ENCODE measurements at regions of chr7 and their contacts with region 1.

Region 1: DNA sequence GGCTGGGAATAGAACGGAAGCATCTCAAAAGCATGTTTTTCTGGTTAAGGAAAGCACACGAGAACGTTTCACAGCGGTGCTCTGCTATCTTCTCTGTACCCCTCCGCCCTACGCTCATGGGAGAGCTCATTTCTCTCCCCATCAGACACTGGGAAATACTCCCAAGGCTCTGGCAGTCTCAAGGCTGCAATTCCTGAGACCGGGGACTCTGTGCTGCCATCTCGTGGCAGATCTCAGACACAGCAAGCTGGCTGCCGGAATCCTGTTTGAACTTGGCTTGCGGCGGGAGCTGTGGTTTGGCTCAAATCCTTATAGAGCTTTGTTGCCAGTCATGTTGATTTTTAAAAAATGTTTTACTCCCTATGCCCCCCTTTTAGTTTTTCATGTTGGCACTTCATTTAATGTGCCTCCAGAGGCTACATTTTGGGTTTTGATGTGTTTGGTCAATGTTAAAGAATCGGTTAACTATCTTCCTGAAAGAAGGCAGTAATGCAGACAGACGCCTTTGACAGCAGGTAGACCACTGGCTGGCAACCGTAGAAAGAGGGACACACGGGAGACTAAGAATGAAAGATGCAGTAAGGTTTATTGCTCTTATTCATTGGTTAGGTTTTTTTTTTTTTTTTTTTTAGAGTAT is 27.6 kb downstream of the BMPER start:
- DNase-seq: peak; percentile 66
- ATAC-seq: peak; percentile 95
- H3K4me3 ChIP-seq: no peak overlapping the region; a peak in 1 of 4 replicates
- H3K27ac ChIP-seq: no peak overlapping the region
- H3K4me1 ChIP-seq: peaks cover 3 to 8% of the 10 kb centered on the region in 2 experiments; a peak in 3 of 4 replicates
- H3K27me3 ChIP-seq: no peaks in the 10 kb centered on the region; the same call in 1 of the 2 replicates
- CTCF ChIP-seq: peak; percentile 64 to 96 (median 93); a peak in 5 of 6 replicates
- POLR2A ChIP-seq: no peak
- RAD21 ChIP-seq: peak; percentile 74

Region 2: DNA sequence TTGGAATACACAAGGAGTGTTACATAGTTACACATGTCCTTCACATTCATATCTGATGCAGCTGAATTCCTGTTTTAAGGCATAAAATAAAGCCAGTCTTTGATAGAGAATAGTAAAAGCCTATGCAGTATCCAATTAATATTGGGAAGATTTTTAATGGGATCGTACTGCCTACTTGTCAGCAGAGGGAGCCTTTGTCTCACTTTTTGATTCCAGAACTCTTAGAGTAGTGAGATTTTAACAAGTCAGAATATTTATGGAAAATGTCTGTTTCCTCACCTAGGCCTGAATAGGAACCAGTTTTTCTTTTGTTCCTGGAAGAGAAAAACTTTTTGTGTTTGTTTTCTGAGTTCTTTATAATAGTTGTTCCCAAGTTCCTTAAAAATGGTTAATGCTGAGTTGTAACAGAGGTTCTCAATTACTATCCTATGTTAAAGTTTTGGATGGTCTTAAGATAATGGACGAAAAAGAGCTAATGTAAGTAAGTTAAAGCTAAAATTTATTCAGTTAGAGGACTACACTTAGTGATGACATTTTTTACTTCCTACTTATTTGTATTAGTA is 689.5 kb before region 1 on chr7:
- CTCF ChIA-PET with region 1: interaction called, 27 read pairs
- POLR2A ChIA-PET with region 1: no interaction called
- RAD21 ChIA-PET with region 1: interaction called in 1 of 2 experiments, 3 read pairs
- intact Hi-C with region 1: loop called (anchors 1 kb)
- DNase-seq: peak; percentile 26
- ATAC-seq: peak; percentile 85
- H3K4me3 ChIP-seq: no peak overlapping the region
- H3K27ac ChIP-seq: no peak overlapping the region
- H3K4me1 ChIP-seq: no peaks in the 10 kb centered on the region
- H3K27me3 ChIP-seq: no peaks in the 10 kb centered on the region
- CTCF ChIP-seq: peak; percentile 57 to 76 (median 66)
- POLR2A ChIP-seq: no peak
- RAD21 ChIP-seq: peak; percentile 75

Region 3: DNA sequence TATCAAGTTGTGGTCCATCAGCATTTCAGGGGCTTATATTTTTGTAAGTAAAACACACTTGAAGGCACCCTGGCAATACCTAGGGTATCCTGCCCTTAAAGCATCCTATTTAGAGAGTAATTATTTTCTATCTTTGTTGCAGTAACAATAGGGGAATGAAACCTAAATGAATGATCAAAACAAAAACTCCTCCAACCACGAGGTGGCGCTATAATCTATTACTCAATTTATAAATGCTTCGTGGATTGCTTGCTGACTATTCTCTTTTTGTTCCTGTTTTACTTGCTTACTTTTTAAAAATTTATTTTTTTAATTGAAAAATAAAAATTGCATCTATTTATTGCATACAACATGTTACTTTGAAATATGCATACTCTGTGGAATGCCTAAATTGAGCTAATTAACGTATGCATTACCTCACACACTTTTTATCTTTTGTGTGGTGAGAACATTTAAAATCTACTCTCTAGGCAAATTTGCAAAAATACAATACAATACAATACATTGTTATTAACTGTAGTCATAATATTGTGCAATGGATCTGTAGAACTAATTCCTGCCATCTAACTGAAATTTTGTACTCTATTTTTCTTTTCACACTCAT is 175.3 kb before region 1 on chr7:
- CTCF ChIA-PET with region 1: interaction called, 17 read pairs
- POLR2A ChIA-PET with region 1: no interaction called
- RAD21 ChIA-PET with region 1: no interaction called
- intact Hi-C with region 1: loop called (anchors 2 kb)
- DNase-seq: no peak
- ATAC-seq: peak; percentile 46; the same call in 1 of the 2 replicates
- H3K4me3 ChIP-seq: no peak overlapping the region
- H3K27ac ChIP-seq: no peak overlapping the region
- H3K4me1 ChIP-seq: no peaks in the 10 kb centered on the region
- H3K27me3 ChIP-seq: 0 out of 2 replicates have a peak, but pooled peaks cover 3% of the 10 kb centered on the region
- CTCF ChIP-seq: peak; percentile 44 to 64 (median 53); a peak in 5 of 6 replicates
- POLR2A ChIP-seq: no peak
- RAD21 ChIP-seq: peak; percentile 54

Region 4: DNA sequence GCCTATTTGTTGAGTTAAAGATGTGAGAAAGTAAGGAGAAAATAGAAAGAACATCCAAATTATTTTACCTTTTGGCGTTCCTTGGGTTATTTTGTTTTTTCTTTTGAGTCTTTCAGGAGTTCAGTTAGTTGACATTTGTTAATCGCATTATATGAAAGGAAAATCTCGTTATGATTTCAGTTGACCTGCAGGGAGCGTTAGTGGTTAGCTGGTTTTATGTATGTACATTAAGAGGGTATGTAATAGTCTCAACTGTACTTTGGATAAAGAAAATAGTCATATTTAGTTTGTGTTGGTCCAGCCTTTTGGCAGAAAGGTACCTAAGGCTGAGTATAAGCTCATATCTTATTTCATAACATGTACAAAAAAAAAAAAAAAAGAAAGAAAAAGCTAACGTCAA is 23.6 kb before region 1 on chr7:
- CTCF ChIA-PET with region 1: interaction called, 36 read pairs
- POLR2A ChIA-PET with region 1: no interaction called
- RAD21 ChIA-PET with region 1: no interaction called
- intact Hi-C with region 1: no loop called
- DNase-seq: no peak
- ATAC-seq: no peak
- H3K4me3 ChIP-seq: no peak overlapping the region
- H3K27ac ChIP-seq: no peak overlapping the region
- H3K4me1 ChIP-seq: peaks cover 0 to 3% of the 10 kb centered on the region in 2 experiments; a peak in 1 of 4 replicates
- H3K27me3 ChIP-seq: peaks cover 20% of the 10 kb centered on the region
- CTCF ChIP-seq: peak in 1 of 3 experiments; percentile 17; a peak in 1 of 6 replicates
- POLR2A ChIP-seq: no peak
- RAD21 ChIP-seq: peak; percentile 24; the same call in 1 of the 2 replicates

Region 5: GRCh38 chr7:33946094-33946700 is 13.2 kb after region 1 on chr7:
- CTCF ChIA-PET with region 1: interaction called, 16 read pairs
- POLR2A ChIA-PET with region 1: no interaction called
- RAD21 ChIA-PET with region 1: no interaction called
- intact Hi-C with region 1: no loop called
- DNase-seq: no peak
- ATAC-seq: no peak
- H3K4me3 ChIP-seq: no peak overlapping the region
- H3K27ac ChIP-seq: no peak overlapping the region
- H3K4me1 ChIP-seq: peaks cover 0 to 4% of the 10 kb centered on the region in 2 experiments; a peak in 1 of 4 replicates
- H3K27me3 ChIP-seq: no peaks in the 10 kb centered on the region
- CTCF ChIP-seq: no peak
- POLR2A ChIP-seq: no peak
- RAD21 ChIP-seq: no peak